ENCODE measurements at regions of chrX and their contacts with region 1.

Region 1: DNA sequence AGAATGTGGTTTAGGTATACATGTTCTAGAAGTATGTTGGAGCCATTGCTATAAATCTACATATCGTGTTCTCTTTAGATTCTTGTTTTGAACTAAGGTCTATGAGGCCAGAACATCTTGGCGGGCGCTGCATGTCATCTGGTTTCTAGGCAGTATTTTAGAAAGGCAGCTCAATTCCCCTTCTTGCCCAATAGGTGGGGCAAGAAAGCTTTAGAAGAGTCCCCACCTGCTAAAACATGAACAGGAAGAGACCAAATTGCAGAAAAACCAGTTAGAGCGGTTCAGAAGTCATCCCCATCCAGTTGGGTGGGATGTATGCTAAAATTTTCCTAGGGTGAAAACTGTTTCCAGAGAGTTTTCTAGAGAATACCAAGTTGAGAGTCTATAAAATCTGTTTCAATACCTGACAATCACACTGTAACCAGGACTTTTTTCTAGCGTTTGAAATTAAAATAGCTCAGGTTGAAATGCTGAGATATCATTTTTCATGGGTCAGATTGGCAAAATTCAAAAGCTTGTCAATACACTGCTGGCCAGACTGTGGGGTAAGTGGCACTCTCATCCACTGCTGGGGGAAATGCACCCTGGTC is 17.5 kb upstream of the SH3KBP1 start:
- DNase-seq: no peak
- H3K4me3 ChIP-seq: no peak overlapping the region
- H3K27ac ChIP-seq: no peak overlapping the region
- H3K4me1 ChIP-seq: peaks cover 0 to 4% (median 0%) of the 10 kb centered on the region in 4 donors
- H3K27me3 ChIP-seq: no peaks in the 10 kb centered on the region
- CTCF ChIP-seq: peak; percentile 44 to 59 (median 51)
- EP300 ChIP-seq: no peak
- POLR2A ChIP-seq: no peak

Region 2: DNA sequence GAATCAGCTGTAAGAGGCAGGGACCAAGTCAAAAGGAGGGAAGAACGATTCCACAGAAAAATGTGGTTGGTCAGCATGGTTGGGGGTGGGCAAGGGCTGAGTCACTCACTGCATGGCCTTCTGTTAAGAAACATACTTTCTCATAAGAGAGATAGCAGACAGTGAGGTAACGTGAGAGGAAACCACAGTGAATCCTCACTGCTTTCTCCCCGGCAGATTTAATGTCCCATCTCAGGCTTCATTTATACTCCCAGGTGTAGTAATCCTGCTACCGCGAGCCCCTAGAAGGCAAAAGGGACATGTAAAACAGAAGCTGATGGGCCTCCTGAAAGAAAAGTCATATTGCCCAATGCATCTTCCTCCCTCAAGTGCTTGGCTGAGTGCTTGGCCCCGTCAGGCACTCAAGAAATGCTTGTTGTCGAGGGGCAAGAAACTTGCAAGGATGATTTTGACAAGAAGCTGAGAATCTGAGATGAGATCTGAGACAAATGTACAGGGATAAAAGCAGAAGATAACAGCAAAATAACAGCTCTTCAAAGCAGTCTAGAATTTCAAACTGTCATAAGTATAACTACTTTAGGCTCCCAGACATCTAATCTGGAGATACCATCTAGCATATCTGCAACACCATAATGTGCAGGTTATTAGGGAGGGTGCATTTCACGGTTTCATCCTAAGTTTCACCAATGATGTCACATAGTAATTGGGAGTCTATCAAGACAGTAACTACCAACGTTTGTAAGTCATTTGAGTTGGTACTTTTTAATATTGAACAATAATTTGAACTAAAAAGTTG is 57.7 kb before region 1 on chrX:
- in situ Hi-C with region 1: no loop called
- intact Hi-C with region 1: loop called (anchors 10 kb)
- DNase-seq: no peak
- H3K4me3 ChIP-seq: no peak overlapping the region
- H3K27ac ChIP-seq: peak overlapping the region in 2 of 4 donors; percentile 21 to 29
- H3K4me1 ChIP-seq: no peaks in the 10 kb centered on the region
- H3K27me3 ChIP-seq: no peaks in the 10 kb centered on the region
- CTCF ChIP-seq: no peak
- EP300 ChIP-seq: no peak
- POLR2A ChIP-seq: no peak

Region 3: DNA sequence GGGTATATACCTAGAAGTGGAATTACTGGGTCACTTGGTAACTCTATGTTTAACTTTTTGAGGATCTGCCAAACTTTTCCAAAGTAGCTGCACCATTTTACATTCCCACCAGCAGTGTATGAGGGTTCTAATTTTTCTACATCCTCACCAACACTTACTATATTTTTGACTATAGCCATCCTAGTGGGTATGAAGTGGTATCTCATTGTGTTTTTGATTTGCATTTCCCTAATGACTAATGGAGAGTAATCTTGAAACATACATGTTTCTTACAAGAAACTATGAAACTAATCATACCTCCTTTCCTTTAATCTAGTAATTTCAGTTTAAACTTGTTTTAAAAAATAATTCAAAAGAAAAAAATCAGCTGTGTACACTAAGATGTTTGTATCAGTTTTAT is 68.1 kb after region 1 on chrX:
- in situ Hi-C with region 1: no loop called
- intact Hi-C with region 1: no loop called
- DNase-seq: no peak
- H3K4me3 ChIP-seq: no peak overlapping the region
- H3K27ac ChIP-seq: no peak overlapping the region
- H3K4me1 ChIP-seq: peaks cover 0 to 10% (median 0%) of the 10 kb centered on the region in 4 donors
- H3K27me3 ChIP-seq: no peaks in the 10 kb centered on the region
- CTCF ChIP-seq: no peak
- EP300 ChIP-seq: no peak
- POLR2A ChIP-seq: no peak

Region 4: GRCh38 chrX:20116579-20117240 is 211.8 kb after region 1 on chrX and contains the start of gene MAP7D2:
- in situ Hi-C with region 1: loop called in 1 of 4 experiments (anchors 25 kb)
- intact Hi-C with region 1: no loop called
- DNase-seq: no peak
- H3K4me3 ChIP-seq: peak within 1 kb of the TSS in 3 of 4 donors; percentile 15 to 42 (median 27)
- H3K27ac ChIP-seq: no peak within 1 kb of the TSS
- H3K4me1 ChIP-seq: peaks cover 0 to 12% (median 4%) of the 10 kb centered on the region in 4 donors
- H3K27me3 ChIP-seq: peaks cover 17% of the 10 kb centered on the region
- CTCF ChIP-seq: no peak
- EP300 ChIP-seq: no peak
- POLR2A ChIP-seq: no peak
- total RNA-seq, gene MAP7D2: 2.1 to 4.4 (median 2.2) TPM in 3 of 4 donors, not detected in the other

Measured in transverse colon (tissue), 4 donors.